ENCODE measurements at regions of chr10 and their contacts with region 1.

Region 1: GRCh38 chr10:119315128-119316001 is 108.0 kb downstream of the GRK5 start:
- DNase-seq: peak; percentile 90
- H3K4me3 Mint-ChIP-seq: peak overlapping the region; percentile 49
- H3K27ac Mint-ChIP-seq: peak overlapping the region; percentile 91
- H3K4me1 Mint-ChIP-seq: peaks cover 53% of the 10 kb centered on the region
- H3K27me3 Mint-ChIP-seq: peaks cover 5% of the 10 kb centered on the region

Region 2: GRCh38 chr10:119061352-119061751 is 254.0 kb before region 1 on chr10:
- CTCF ChIA-PET with region 1: no interaction called
- POLR2A ChIA-PET with region 1: no interaction called
- intact Hi-C with region 1: no loop called
- DNase-seq: no peak
- H3K4me3 Mint-ChIP-seq: no peak overlapping the region
- H3K27ac Mint-ChIP-seq: peak overlapping the region; percentile 13
- H3K4me1 Mint-ChIP-seq: peaks cover 18% of the 10 kb centered on the region
- H3K27me3 Mint-ChIP-seq: no peaks in the 10 kb centered on the region

Region 3: DNA sequence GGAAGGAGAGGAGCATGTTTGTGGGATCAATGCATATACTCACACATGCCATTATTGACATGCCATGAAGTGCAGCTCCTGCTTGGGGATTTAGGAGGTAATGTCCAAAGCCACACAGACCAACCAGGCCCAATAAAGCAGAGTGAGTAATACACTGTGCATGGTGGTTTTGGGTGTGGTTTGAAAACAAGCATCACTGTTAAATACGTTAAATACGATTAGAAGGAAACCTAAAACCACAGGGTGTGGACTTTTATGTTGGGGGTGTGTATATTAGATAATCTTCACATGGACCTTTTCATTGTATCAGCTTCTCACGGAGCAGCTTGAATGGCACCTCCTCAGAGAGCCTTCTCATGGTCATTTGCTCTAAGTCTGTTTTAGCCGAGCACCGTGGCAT is 224.4 kb before region 1 on chr10:
- CTCF ChIA-PET with region 1: no interaction called
- POLR2A ChIA-PET with region 1: no interaction called
- intact Hi-C with region 1: loop called (anchors 2 kb)
- DNase-seq: peak; percentile 55
- H3K4me3 Mint-ChIP-seq: peak overlapping the region; percentile 25
- H3K27ac Mint-ChIP-seq: peak overlapping the region; percentile 74
- H3K4me1 Mint-ChIP-seq: peaks cover 47% of the 10 kb centered on the region
- H3K27me3 Mint-ChIP-seq: no peaks in the 10 kb centered on the region

Region 4: DNA sequence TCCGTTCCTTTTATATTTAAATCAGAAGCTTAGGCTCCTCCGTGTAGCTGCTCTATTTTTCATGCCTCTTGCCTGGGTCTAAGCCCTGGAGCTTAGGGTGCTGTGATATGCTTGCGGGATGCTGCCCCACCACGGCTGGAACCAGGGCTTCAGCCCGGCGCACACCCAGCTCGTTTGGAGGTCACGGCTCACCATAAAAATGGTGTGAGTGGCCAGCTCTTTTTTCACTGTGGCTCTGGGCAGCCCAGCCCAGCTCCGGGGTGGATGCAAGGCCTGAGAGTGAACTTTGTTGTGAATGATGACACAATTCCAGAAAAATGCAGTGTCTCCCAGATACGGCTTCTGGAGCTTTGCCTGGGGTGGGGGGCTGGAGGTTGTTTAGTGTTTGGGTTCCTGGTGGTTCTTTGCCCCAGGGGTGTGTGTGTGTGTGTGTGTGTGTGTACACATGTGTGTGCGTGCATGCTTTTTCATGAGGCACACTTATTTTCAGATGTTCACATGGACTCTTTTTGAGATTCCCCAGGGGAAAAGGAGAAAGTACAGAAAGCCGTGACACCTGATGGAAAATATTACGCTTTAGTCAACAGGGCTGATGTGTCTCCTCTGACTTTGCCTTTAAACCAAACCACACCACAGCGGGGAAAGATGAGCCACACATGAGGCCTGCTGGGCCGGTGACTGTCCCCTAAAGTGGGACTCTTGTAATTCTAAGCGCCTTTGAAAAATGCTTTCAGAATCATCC is 61.8 kb before region 1 on chr10:
- CTCF ChIA-PET with region 1: no interaction called
- POLR2A ChIA-PET with region 1: no interaction called
- intact Hi-C with region 1: loop called (anchors 1 kb)
- DNase-seq: peak; percentile 79
- H3K4me3 Mint-ChIP-seq: no peak overlapping the region
- H3K27ac Mint-ChIP-seq: peak overlapping the region; percentile 77
- H3K4me1 Mint-ChIP-seq: peaks cover 51% of the 10 kb centered on the region
- H3K27me3 Mint-ChIP-seq: no peaks in the 10 kb centered on the region

Region 5: GRCh38 chr10:119333146-119333792 is 17.9 kb after region 1 on chr10:
- CTCF ChIA-PET with region 1: interaction called, 3 read pairs
- POLR2A ChIA-PET with region 1: interaction called, 3 read pairs
- intact Hi-C with region 1: loop called (anchors 1 kb)
- DNase-seq: peak; percentile 78
- H3K4me3 Mint-ChIP-seq: no peak overlapping the region
- H3K27ac Mint-ChIP-seq: no peak overlapping the region
- H3K4me1 Mint-ChIP-seq: peaks cover 13% of the 10 kb centered on the region
- H3K27me3 Mint-ChIP-seq: no peaks in the 10 kb centered on the region

Region 6: DNA sequence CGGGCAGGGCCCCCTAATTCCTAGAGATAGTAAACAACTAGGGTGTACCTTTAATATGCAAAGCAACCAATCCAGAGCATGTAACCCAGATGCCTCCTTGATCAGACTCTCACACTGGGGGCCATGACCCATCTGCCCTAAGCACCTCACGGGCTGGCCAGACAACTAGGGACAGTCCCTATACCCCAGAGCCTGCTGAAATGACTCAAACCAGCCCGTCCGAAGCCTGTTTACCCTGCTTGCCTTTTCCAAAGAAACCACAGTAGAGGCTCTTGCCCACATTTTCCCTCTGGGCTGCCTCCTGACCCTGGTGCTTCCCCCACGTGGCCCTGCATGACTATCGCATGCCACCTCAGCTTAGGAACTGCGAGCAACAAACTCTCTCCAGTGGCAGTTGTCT is 180.9 kb after region 1 on chr10:
- CTCF ChIA-PET with region 1: no interaction called
- POLR2A ChIA-PET with region 1: no interaction called
- intact Hi-C with region 1: loop called (anchors 1 kb)
- DNase-seq: peak; percentile 82
- H3K4me3 Mint-ChIP-seq: no peak overlapping the region
- H3K27ac Mint-ChIP-seq: peak overlapping the region; percentile 69
- H3K4me1 Mint-ChIP-seq: peaks cover 76% of the 10 kb centered on the region
- H3K27me3 Mint-ChIP-seq: no peaks in the 10 kb centered on the region